Mammary epithelial cell (primary cell): ENCODE measurements at regions of chr17 and their contacts with region 1.

Region 1: DNA sequence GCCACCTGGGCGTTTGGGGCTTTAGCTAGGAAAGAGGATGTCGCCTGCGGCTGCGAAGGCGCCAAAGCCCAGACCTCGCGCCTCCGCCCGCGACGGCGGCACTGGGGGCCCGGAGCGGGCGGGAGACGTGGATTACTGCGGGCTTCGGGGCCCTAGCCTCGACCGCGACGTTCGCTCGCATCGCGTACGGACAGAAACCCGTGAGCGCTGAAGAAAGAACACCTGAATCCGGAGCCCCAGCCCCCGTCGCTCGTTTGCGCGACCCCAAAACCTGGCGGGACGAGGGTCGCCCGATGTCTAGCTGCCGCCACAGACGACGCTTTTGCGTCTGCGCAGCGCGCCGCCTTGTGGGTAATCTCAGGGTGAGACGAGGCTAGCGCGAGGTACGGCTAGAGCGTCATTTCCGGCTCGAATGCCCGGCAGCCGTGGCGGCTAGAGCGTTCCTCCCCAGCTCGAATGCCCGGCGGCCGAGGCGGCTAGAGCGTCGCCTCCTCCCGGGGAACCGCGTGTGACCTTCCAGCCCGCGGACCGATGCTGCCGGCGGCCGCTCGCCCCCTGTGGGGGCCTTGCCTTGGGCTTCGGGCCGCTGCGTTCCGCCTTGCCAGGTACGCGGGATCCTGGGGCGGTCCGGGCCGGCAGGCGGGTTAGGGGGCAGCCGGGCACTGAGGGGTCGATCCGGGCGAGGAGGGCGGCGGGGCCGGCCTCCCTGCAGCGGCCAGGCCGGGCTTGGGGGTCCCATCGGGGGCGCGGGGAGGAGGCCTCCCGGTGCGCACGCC is at the start of gene MRPL12:
- DNase-seq: peak; percentile 89
- H3K4me3 ChIP-seq: peak within 1 kb of the TSS; percentile 59 to 86 (median 75)
- H3K27ac ChIP-seq: peak within 1 kb of the TSS; percentile 86
- H3K4me1 ChIP-seq: peaks cover 29% of the 10 kb centered on the region
- H3K27me3 ChIP-seq: no peaks in the 10 kb centered on the region
- CTCF ChIP-seq: no peak
- total RNA-seq, gene MRPL12: 13.2 to 104 TPM

Region 2: DNA sequence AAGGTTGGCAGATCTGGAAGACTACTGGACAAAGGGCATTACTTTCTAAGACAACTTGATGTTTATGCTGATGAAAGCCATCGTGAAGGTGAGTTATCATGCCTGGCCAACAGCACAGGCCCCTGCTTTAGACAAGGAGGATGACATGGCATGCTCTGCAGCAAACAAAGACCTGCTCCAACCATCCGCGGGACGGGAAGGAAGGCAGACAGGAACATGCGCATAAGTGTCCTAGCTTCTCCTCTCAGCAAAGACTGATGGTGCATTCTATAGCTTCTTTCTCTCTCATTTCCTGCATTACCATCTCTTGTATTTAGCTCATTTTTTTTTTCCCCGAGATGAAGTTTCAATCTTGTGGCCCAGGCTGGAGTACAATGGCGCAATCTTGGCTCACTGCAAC is 71.7 kb before region 1 on chr17:
- CTCF ChIA-PET with region 1: no interaction called
- dilution Hi-C with region 1: no loop called
- in situ Hi-C with region 1: no loop called
- intact Hi-C with region 1: no loop called
- DNase-seq: no peak
- H3K4me3 ChIP-seq: no peak overlapping the region
- H3K27ac ChIP-seq: no peak overlapping the region
- H3K4me1 ChIP-seq: peaks cover 9% of the 10 kb centered on the region
- H3K27me3 ChIP-seq: no peaks in the 10 kb centered on the region
- CTCF ChIP-seq: no peak

Region 3: GRCh38 chr17:81666342-81667191 is 36.6 kb before region 1 on chr17 and contains the starts of genes CCDC137 and OXLD1:
- CTCF ChIA-PET with region 1: no interaction called
- dilution Hi-C with region 1: loop called (anchors 5 kb)
- in situ Hi-C with region 1: no loop called
- intact Hi-C with region 1: no loop called
- DNase-seq: peak; percentile 94
- H3K4me3 ChIP-seq: peak within 1 kb of the TSS; percentile 70 to 89 (median 82)
- H3K27ac ChIP-seq: peak within 1 kb of the TSS; percentile 74
- H3K4me1 ChIP-seq: peaks cover 21% of the 10 kb centered on the region
- H3K27me3 ChIP-seq: no peaks in the 10 kb centered on the region
- CTCF ChIP-seq: no peak
- total RNA-seq, gene CCDC137: 5.3 to 34.0 TPM
- total RNA-seq, gene OXLD1: 25.2 to 42.4 TPM

Region 4: GRCh38 chr17:81683584-81684237 is 19.4 kb before region 1 on chr17 and contains the starts of genes ARL16 and HGS:
- CTCF ChIA-PET with region 1: no interaction called
- dilution Hi-C with region 1: no loop called
- in situ Hi-C with region 1: no loop called
- intact Hi-C with region 1: loop called (anchors 2 kb)
- DNase-seq: peak; percentile 99
- H3K4me3 ChIP-seq: peak within 1 kb of the TSS; percentile 76 to 94 (median 92)
- H3K27ac ChIP-seq: peak within 1 kb of the TSS; percentile 78
- H3K4me1 ChIP-seq: peaks cover 19% of the 10 kb centered on the region
- H3K27me3 ChIP-seq: no peaks in the 10 kb centered on the region
- CTCF ChIP-seq: no peak
- total RNA-seq, gene ARL16: 19.5 to 27.7 TPM
- total RNA-seq, gene HGS: 88.0 to 140 TPM

Region 5: DNA sequence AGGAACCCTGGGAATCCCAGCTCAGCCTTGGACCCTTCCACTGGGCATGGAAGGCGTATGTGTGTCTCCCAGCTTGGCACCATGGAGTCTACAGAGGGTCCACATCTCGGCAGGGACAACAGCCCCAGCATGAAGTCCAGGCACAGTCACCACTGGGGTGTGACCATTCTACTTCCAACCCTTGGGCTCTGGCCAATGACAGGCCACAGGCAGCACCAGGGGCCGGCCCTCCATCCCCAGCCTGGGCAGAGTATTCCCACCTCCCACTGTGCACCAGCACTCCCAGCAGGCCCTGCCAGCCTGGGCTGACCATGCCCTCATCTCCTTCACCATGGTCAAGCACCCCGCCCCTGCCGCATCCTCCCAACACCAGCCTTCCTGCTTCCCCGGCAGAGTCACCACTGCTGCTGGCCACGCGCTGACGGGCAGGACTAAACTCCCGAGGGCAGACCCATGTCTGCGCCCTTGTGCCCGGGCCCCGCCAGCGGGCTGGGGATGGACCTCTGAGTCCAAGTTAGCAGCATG is 141.2 kb after region 1 on chr17:
- CTCF ChIA-PET with region 1: no interaction called
- dilution Hi-C with region 1: no loop called
- in situ Hi-C with region 1: no loop called
- intact Hi-C with region 1: no loop called
- DNase-seq: no peak
- H3K4me3 ChIP-seq: no peak overlapping the region
- H3K27ac ChIP-seq: no peak overlapping the region
- H3K4me1 ChIP-seq: peaks cover 35% of the 10 kb centered on the region
- H3K27me3 ChIP-seq: no peaks in the 10 kb centered on the region
- CTCF ChIP-seq: no peak